PC-3 (cell line): ENCODE measurements at regions of chr17 and their contacts with region 1.

Region 1: DNA sequence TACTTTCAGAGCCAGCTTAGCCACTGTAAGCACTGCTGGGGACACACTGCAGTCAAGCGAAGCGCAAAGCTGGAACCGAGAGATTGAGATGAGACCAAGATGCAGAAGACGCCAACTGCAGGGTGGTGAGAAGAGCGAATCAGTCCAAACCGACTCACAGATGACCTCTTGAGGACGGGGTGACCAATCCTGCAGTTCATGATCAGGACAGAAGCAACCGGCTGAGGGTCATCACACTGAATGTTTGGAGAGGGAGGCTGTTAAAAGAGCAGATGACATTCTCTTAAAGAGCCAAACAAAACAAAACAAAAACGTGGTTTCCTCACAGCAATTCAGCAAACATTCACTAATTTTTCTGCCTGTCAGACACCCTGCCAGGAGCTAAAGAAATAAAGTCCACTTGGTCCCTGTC is 8.5 kb downstream of the HASPIN start:
- DNase-seq: no peak
- ATAC-seq: no peak
- H3K4me3 ChIP-seq: no peak overlapping the region
- H3K27ac ChIP-seq: no peak overlapping the region
- H3K4me1 ChIP-seq: peaks cover 6% of the 10 kb centered on the region; the same call in 1 of the 2 replicates
- H3K27me3 ChIP-seq: no peaks in the 10 kb centered on the region
- CTCF ChIP-seq: no peak

Region 2: GRCh38 chr17:3683054-3683511 is 49.1 kb before region 1 on chr17:
- CTCF ChIA-PET with region 1: no interaction called
- POLR2A ChIA-PET with region 1: no interaction called
- intact Hi-C with region 1: loop called (anchors 5 kb)
- DNase-seq: peak; percentile 35
- ATAC-seq: peak; percentile 62; the same call in 1 of the 2 replicates
- H3K4me3 ChIP-seq: no peak overlapping the region
- H3K27ac ChIP-seq: no peak overlapping the region
- H3K4me1 ChIP-seq: no peaks in the 10 kb centered on the region
- H3K27me3 ChIP-seq: no peaks in the 10 kb centered on the region
- CTCF ChIP-seq: peak; percentile 75